Activated CD4-positive, alpha-beta T cell treated with anti-CD3 and anti-CD28 coated beads, Interleukin-2, amount 10 ng/mL, durations not matched to agents 24 days and 14 days (primary cell): ENCODE measurements at regions of chr11 and their contacts with region 1.

Region 1: GRCh38 chr11:126268708-126269579 is at the starts of genes FOXRED1 and SRPRA:
- DNase-seq: peak; percentile 100
- H3K4me3 Mint-ChIP-seq: peak within 1 kb of the TSS; percentile 95
- H3K27ac Mint-ChIP-seq: peak within 1 kb of the TSS; percentile 92
- H3K4me1 Mint-ChIP-seq: peaks cover 33% of the 10 kb centered on the region
- H3K27me3 Mint-ChIP-seq: no peaks in the 10 kb centered on the region
- total RNA-seq, gene FOXRED1: 57.8 and 59.2 TPM in 2 replicates
- total RNA-seq, gene SRPRA: 180 and 191 TPM in 2 replicates

Region 2: DNA sequence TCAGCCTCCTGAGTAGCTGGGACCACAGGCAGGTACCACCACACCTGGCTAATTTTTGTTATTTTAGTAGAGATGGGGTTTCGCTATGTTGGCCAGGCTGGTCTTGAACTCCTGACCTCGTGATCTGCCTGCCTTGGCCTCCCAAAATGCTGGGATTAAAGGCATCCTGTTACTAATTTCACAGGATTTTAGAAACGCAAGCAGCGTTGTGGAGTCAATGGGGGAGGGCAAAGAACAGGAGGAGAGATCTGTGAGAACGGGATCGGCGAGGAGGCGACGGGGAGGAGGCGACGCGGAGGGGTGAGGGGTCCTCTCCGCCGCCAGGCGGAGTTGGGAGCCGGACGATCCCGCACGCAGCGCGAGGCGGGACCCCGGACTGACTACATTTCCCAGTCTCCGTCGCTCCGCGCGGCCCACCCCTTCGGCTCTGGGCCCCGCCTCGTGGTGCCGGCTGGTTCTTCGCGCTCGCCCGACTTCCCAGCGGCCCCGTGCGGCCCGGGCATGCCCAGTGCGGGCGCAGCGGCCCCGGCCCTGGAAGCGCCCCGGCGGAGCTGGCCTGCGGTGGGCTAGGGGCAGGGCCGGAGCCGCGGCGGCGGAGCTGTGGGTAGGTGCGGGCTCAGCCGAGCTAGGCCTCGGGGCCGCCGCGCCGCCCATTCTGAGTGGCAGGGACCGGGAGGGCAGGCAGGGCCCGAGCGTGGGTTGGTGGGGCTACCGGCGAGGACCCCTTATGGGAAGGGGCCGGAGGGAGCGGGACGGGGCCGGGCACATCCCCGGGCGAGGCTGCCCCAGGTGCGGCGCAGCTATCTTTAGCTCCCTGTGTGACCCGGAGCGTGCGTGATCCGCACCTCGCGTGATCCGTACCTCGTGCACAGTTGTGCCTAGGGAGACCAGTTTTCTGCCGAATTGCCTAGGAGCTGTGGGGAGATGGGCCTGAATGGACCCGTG is 699.7 kb before region 1 on chr11 and contains the start of gene EI24:
- intact Hi-C with region 1: loop called (anchors 1 kb)
- DNase-seq: peak; percentile 97
- H3K4me3 Mint-ChIP-seq: peak within 1 kb of the TSS; percentile 96
- H3K27ac Mint-ChIP-seq: peak within 1 kb of the TSS; percentile 94
- H3K4me1 Mint-ChIP-seq: peaks cover 18% of the 10 kb centered on the region
- H3K27me3 Mint-ChIP-seq: no peaks in the 10 kb centered on the region
- total RNA-seq, gene EI24: 61.7 TPM in 2 replicates

Region 3: DNA sequence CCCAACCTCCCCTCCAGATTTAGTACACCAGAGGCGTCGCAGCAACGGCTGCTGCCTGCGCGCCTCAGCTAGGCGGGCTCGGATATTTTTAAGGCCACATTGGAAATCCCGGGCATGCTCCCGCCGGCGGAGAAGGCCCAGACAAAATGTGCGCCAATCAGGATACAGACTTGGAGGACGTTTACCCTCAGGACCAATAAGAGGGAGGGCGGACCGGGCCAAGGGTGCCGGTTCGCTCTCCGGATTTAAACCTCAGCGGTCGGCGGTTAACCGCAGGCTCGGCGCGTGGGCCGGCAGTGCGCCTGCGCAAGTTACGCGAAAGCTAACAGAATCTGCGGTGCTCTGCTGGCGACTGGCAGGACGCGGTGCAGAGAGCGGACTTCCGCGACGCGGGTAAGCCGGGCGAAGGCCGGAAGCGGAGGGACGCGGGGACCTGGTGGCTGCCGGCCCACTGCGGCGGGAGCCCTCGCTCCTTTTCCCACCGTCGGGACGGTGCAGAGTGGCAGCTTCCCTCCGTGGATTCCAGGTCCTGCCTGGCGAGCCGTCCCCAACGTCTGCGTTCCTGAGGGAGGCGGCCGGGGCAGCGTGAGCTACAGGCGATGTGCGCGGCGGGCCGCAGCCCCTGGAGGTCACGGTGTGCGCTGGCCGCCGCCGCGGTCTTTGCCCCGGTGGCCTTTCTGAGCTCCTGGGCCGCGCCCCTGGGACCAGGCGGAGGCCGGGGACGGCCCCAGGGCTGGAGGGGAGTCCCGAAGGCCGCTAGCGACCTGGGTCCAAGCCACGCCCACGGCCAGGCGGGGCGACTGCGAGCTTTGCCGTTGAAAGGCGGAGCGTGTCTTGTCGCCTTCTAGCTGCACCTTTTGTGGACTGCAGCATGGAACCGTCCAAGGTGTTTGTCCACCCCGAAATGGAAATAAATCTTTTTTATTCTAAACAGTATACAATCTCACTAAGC is 381.3 kb before region 1 on chr11 and contains the start of gene HYLS1:
- intact Hi-C with region 1: loop called (anchors 1 kb)
- DNase-seq: peak; percentile 100
- H3K4me3 Mint-ChIP-seq: peak within 1 kb of the TSS; percentile 89
- H3K27ac Mint-ChIP-seq: peak within 1 kb of the TSS; percentile 97
- H3K4me1 Mint-ChIP-seq: peaks cover 34% of the 10 kb centered on the region
- H3K27me3 Mint-ChIP-seq: peaks cover 4% of the 10 kb centered on the region
- total RNA-seq, gene HYLS1: 6.7 and 7.6 TPM in 2 replicates

Region 4: DNA sequence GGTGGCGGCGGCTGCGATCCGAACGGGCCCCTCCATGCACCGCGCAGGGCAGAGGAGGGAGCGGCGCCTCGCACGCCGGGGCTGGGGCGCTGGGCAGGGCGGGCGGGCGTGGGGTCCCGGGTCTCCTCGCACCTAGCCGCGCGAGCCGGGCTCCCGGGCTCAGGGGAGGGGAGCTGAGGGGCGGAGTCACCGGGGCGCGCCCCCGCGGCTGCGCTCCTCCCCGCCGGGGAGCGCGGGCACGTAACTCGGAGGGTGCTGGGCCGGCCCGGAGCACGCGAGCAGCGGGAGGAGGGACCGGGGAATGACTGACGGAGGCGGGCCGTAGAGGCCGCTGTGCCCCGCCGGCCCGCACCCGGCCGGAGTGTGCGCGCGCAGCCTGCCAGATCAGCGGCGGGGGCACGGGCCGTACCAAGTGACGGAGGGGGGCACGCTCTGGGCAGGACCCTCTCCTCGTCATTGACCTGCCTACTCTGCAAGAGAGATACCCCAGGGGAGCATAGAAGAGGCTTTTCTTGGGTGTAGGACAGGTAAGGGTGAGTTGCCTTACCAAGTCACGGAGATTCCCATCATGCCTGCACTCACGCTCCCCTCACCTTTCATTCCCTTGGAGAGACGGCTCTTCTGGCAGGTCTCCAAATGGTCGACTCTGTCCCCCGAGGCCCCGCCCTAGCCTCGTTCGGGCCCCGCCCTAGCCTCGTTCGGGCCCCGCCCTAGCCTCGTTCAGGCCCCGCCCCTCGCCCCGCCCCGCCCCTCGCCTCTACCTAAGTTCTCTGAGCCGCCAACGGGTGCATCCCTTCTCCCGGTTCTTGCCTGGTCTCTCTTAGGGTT is 206.1 kb before region 1 on chr11 and contains the start of gene CDON:
- intact Hi-C with region 1: loop called (anchors 2 kb)
- DNase-seq: peak; percentile 98
- H3K4me3 Mint-ChIP-seq: peak within 1 kb of the TSS; percentile 80
- H3K27ac Mint-ChIP-seq: peak within 1 kb of the TSS; percentile 97
- H3K4me1 Mint-ChIP-seq: peaks cover 5% of the 10 kb centered on the region
- H3K27me3 Mint-ChIP-seq: peaks cover 46% of the 10 kb centered on the region
- total RNA-seq, gene CDON: 1.9 TPM in 2 replicates

Region 5: GRCh38 chr11:126282736-126283591 is 14.0 kb after region 1 on chr11 and contains the start of gene TIRAP:
- intact Hi-C with region 1: loop called (anchors 1 kb)
- DNase-seq: peak; percentile 90
- H3K4me3 Mint-ChIP-seq: peak within 1 kb of the TSS; percentile 98
- H3K27ac Mint-ChIP-seq: peak within 1 kb of the TSS; percentile 94
- H3K4me1 Mint-ChIP-seq: peaks cover 31% of the 10 kb centered on the region
- H3K27me3 Mint-ChIP-seq: no peaks in the 10 kb centered on the region
- total RNA-seq, gene TIRAP: 11.4 and 12.0 TPM in 2 replicates